ENCODE measurements at regions of chr14 and their contacts with region 1.

Region 1: GRCh38 chr14:60184146-60184904 is 19.1 kb upstream of the DHRS7 start:
- DNase-seq: no peak
- ATAC-seq: peak in 1 of 2 donors; percentile 25
- H3K4me3 ChIP-seq: peak overlapping the region; percentile 54 to 56 (median 54)
- H3K27ac ChIP-seq: peak overlapping the region; percentile 77 to 99 (median 78)
- H3K4me1 ChIP-seq: peaks cover 18 to 27% of the 10 kb centered on the region in 2 donors
- H3K27me3 ChIP-seq: no peaks in the 10 kb centered on the region
- CTCF ChIP-seq: peak; percentile 76 to 97 (median 80)
- POLR2A ChIP-seq: no peak

Region 2: DNA sequence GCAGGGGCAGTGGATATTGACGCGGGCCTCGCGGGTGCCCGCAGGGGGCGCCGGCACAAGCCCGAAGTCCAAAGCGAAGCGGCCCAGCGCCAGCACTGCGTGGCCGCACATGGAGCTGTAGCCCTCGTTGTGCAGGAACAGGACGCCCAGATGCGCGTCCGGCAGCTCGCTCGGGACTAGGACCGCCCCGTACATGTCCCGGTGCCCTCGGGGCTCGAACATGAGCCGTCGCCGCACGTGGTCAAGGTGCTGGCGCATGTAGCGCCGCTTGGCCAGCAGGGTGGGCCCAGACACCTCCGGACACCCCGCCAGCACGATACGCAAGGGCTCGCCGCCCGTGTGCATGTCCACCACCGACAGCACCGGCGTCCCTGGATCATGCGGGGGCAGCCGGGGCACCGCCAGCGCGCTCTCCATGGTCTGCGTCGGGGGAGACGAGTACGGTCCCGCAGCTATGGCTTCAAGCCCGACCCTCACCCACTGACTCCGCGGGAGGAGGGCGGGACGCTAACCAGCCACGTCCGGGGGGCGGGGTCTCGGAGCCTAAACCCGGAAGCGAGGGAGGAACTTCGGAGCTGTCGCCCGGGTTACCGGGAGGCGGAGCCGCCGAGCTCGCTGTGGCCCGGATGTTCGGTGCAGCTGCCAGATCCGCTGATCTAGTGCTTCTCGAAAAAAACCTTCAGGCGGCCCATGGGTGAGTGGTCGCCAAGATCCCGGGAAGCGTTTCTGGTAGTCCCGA is 700.3 kb before region 1 on chr14 and contains the starts of genes JKAMP and L3HYPDH:
- in situ Hi-C with region 1: no loop called
- intact Hi-C with region 1: loop called (anchors 5 kb)
- DNase-seq: peak; percentile 95
- ATAC-seq: peak; percentile 93 to 94
- H3K4me3 ChIP-seq: peak within 1 kb of the TSS; percentile 90 to 95 (median 92)
- H3K27ac ChIP-seq: peak within 1 kb of the TSS; percentile 89 to 95 (median 94)
- H3K4me1 ChIP-seq: peaks cover 33 to 37% of the 10 kb centered on the region in 2 donors
- H3K27me3 ChIP-seq: no peaks in the 10 kb centered on the region
- CTCF ChIP-seq: peak; percentile 58 to 78 (median 73)
- POLR2A ChIP-seq: peak; percentile 79 to 83
- total RNA-seq, gene JKAMP: 30.1 to 43.9 (median 34.0) TPM
- total RNA-seq, gene L3HYPDH: 13.0 to 34.6 (median 22.5) TPM

Region 3: DNA sequence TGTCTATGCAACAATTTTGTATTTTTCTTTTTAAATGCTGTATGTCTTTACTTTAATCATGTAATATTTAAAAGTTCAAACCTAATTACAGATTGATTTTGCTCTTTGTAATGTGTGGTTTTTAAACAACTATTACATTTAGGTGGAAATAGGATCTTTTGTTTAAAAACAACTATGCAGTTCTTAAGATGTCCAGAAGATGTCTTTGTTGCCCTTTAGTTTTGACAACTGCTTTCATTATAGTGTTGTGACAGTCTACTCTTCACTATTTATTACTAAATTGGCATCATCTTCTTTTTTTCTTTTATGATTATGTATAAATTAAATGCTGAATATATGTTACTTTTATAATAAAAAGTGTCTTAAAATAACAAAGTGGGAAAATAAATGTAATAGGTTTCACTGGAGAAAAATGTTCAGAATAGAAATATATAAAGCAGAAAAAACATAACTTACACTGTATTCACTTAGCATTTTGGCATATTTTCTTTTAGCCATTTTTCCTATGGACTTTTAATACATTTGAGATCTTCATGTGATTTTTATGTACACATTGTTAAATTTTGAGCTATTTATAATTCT is 119.7 kb before region 1 on chr14:
- in situ Hi-C with region 1: loop called in 3 of 4 experiments (anchors 5 to 10 kb)
- intact Hi-C with region 1: loop called (anchors 1 kb)
- DNase-seq: no peak
- ATAC-seq: peak; percentile 56 to 75
- H3K4me3 ChIP-seq: no peak overlapping the region
- H3K27ac ChIP-seq: no peak overlapping the region
- H3K4me1 ChIP-seq: peaks cover 0 to 4% of the 10 kb centered on the region in 2 donors
- H3K27me3 ChIP-seq: no peaks in the 10 kb centered on the region
- CTCF ChIP-seq: peak; percentile 45 to 90 (median 66)
- POLR2A ChIP-seq: no peak

Region 4: GRCh38 chr14:60091550-60092530 is 92.5 kb before region 1 on chr14 and contains the start of gene PCNX4:
- in situ Hi-C with region 1: no loop called
- intact Hi-C with region 1: loop called (anchors 1 kb)
- DNase-seq: peak; percentile 97 to 98
- ATAC-seq: peak; percentile 89 to 91
- H3K4me3 ChIP-seq: peak within 1 kb of the TSS; percentile 71 to 86 (median 73)
- H3K27ac ChIP-seq: peak within 1 kb of the TSS; percentile 88 to 99 (median 96)
- H3K4me1 ChIP-seq: peaks cover 36 to 41% of the 10 kb centered on the region in 2 donors
- H3K27me3 ChIP-seq: no peaks in the 10 kb centered on the region
- CTCF ChIP-seq: peak in 1 of 5 experiments; percentile 12
- POLR2A ChIP-seq: peak; percentile 92 to 96
- total RNA-seq, gene PCNX4: 11.3 to 42.8 (median 34.8) TPM

Region 5: DNA sequence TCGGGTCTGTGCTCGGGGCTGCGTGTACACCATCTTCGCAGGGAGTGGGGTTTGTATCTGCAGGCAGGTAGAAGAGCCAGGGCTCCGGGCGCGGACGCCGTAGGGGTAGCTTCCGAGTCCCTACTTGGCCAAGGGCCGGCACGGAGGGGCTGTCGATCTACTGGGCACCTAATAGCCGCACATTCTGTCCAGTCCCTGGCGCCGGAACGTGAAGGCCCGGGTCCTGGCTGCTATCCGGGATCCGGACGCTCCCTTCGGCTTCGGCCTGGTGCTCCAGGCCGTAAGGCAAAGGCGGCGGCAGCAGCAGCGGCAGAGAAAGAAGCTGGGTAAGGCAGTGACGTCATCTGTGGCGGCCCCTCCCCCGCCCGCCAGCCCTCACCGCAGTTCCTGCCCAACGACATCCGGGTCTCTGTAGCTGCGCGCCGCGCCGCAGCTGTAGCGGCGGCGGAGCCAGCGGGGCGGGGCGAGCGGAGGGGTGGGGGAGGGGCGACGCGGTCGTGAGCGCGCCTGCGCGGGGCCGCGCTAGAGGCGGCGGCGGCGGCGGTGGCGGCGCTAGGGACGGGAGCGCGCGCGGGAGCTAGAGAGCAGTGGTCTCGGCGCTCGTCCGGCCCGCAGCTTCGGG is 64.5 kb after region 1 on chr14 and contains the start of gene PPM1A:
- in situ Hi-C with region 1: no loop called
- intact Hi-C with region 1: loop called (anchors 2 kb)
- DNase-seq: peak; percentile 90 to 96
- ATAC-seq: peak; percentile 77 to 80
- H3K4me3 ChIP-seq: peak within 1 kb of the TSS; percentile 77 to 90 (median 88)
- H3K27ac ChIP-seq: peak within 1 kb of the TSS; percentile 97 to 100 (median 100)
- H3K4me1 ChIP-seq: peaks cover 35 to 38% of the 10 kb centered on the region in 2 donors
- H3K27me3 ChIP-seq: no peaks in the 10 kb centered on the region
- CTCF ChIP-seq: peak in 1 of 5 experiments; percentile 21
- POLR2A ChIP-seq: peak; percentile 83 to 95
- total RNA-seq, gene PPM1A: 81.2 to 107 (median 86.1) TPM

Region 6: DNA sequence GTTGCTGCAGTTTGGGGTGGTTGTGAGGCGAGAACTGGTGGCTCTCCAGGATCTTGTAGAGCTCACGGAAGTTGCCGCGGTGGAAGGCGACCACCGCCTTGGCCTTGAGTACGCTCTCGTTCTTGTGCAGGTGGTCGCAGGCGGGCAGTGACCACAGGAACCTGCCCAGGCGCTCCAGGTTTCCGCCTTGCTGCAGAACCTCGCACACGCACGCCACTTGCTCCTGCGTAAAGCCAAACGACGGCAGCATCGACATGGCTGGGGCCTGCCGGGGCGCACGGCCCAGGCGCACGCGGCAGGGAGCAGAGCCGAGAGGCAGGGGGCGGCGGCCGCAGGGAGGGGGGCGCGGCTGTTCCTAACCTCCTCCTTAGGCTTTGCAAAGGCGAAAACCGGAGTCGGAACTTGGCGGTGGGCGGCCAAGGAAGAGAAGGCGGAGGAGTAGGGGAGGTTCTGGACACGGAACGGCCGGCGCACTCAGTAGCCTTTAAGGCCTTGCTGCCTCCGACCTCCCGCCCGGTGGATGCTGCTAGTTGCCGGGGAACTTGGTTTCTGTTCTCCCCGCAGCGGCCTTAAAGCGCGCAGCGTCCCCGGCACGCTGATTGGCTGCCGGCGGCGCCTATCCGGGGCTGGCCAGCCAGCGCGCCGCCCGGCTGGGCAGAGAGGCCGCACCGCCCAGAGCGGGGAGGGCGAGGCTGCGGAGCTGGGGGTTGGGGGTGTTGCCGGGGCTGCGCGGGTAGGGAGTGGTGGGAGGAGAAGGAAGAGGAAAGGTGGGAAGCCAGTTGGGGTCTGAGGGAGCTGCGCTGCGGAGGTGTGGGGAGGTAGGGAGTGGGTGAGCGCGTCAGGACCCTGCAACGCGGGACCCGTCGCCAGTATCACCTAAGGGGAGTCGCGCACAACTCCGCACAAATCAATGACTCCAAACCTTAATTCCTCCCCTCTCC is 464.9 kb after region 1 on chr14 and contains the start of gene SIX1:
- in situ Hi-C with region 1: no loop called
- intact Hi-C with region 1: loop called (anchors 5 kb)
- DNase-seq: peak; percentile 88 to 89
- ATAC-seq: peak; percentile 33 to 45
- H3K4me3 ChIP-seq: peak within 1 kb of the TSS; percentile 86 to 90 (median 88)
- H3K27ac ChIP-seq: peak within 1 kb of the TSS; percentile 93 to 98 (median 95)
- H3K4me1 ChIP-seq: peaks cover 31 to 38% of the 10 kb centered on the region in 2 donors
- H3K27me3 ChIP-seq: no peaks in the 10 kb centered on the region
- CTCF ChIP-seq: no peak
- POLR2A ChIP-seq: peak; percentile 97 to 99
- total RNA-seq, gene SIX1: 28.3 to 76.4 (median 56.3) TPM

Region 7: GRCh38 chr14:60845523-60845922 is 661.2 kb after region 1 on chr14:
- in situ Hi-C with region 1: no loop called
- intact Hi-C with region 1: no loop called
- DNase-seq: no peak
- ATAC-seq: no peak
- H3K4me3 ChIP-seq: no peak overlapping the region
- H3K27ac ChIP-seq: no peak overlapping the region
- H3K4me1 ChIP-seq: peaks cover 6 to 7% of the 10 kb centered on the region in 2 donors
- H3K27me3 ChIP-seq: no peaks in the 10 kb centered on the region
- CTCF ChIP-seq: no peak
- POLR2A ChIP-seq: no peak

Measured in gastrocnemius medialis (tissue), 4 donors.